CD4-positive, alpha-beta memory T cell (primary cell): ENCODE measurements at regions of chr14 and their contacts with region 1.

Region 1: DNA sequence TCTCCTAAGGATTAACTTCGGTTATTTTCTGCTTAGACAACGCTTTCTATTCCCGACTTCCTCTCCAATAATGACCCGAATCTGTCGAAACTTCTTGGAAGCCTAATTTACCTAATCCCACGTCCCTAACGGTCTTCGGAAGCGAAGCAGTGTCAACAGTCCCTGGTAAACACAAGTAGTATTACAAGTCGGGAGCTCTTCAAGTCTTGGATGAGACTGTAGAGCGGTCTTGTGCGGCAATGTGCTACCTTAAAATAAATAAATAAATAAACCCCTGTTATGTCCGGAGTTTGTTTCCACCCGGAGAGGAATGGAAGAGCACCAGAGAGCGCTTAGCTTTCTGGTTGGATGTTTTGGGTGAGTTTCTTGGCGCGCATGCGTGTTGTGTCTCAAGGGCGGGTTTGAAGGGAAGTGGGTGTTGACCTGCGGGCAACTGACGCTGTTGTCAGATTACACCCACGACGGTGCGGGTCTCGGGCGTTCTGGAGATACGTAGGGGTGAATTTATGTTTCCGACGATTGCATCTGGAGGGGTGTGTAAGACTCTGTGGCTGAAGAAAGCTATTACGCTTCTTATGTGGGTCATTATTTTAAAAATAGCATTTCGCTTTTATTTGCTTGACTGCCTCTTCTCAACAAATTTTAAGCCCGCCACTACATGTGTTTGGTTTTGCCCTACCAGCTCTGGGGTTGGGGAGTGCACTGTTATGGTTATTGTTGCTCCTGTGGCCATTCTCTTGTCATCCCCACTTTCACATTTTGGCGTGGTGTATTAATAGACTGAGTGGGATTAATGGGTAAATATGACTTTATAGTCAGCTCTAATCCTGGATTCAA is at the starts of genes KIAA0586 and TIMM9:
- DNase-seq: peak; percentile 95 to 99 (median 98)
- H3K4me3 ChIP-seq: peak within 1 kb of the TSS; percentile 90 to 96
- H3K4me3 Mint-ChIP-seq: peak within 1 kb of the TSS; percentile 91 to 97 (median 94)
- H3K27ac ChIP-seq: peak within 1 kb of the TSS; percentile 88
- H3K27ac Mint-ChIP-seq: peak within 1 kb of the TSS; percentile 94 to 100 (median 98)
- H3K4me1 ChIP-seq: peaks cover 39% of the 10 kb centered on the region
- H3K4me1 Mint-ChIP-seq: peaks cover 23 to 67% (median 44%) of the 10 kb centered on the region in 4 donors
- H3K27me3 ChIP-seq: no peaks in the 10 kb centered on the region
- H3K27me3 Mint-ChIP-seq: peaks cover 0 to 2% of the 10 kb centered on the region in 2 donors
- total RNA-seq, gene KIAA0586: 43.3 to 48.2 TPM
- total RNA-seq, gene TIMM9: 28.0 to 28.3 TPM

Region 2: GRCh38 chr14:57390028-57390805 is 1037.3 kb before region 1 on chr14 and contains the start of gene NAA30:
- CTCF ChIA-PET with region 1: no interaction called
- POLR2A ChIA-PET with region 1: no interaction called
- intact Hi-C with region 1: loop called (anchors 5 kb)
- DNase-seq: peak; percentile 93 to 98 (median 96)
- H3K4me3 ChIP-seq: peak within 1 kb of the TSS; percentile 50 to 85
- H3K4me3 Mint-ChIP-seq: peak within 1 kb of the TSS; percentile 90 to 98 (median 94)
- H3K27ac ChIP-seq: peak within 1 kb of the TSS; percentile 83
- H3K27ac Mint-ChIP-seq: peak within 1 kb of the TSS; percentile 88 to 97 (median 96)
- H3K4me1 ChIP-seq: peaks cover 42% of the 10 kb centered on the region
- H3K4me1 Mint-ChIP-seq: peaks cover 30 to 53% (median 42%) of the 10 kb centered on the region in 4 donors
- H3K27me3 ChIP-seq: no peaks in the 10 kb centered on the region
- H3K27me3 Mint-ChIP-seq: no peaks in the 10 kb centered on the region
- total RNA-seq, gene NAA30: 18.6 to 21.8 TPM

Region 3: DNA sequence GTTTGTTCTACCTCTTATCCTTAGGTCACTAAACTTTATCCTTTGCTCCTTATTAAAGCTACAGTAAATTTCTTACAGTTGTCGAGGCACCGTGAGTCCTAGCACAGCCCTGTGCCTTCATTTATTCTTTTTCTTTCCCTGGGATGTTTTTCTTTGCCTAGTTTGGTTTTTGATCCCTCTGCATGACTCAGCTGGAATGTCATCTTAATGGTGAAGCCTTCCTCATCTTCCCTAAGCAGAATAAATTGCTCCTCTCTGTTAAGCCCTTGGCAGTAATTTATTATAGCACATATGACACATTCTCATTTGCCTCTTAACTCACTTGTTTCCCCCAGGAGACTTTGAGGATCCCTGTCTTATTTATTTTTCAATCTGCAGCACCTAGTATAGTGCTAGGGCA is 211.0 kb before region 1 on chr14:
- CTCF ChIA-PET with region 1: no interaction called
- POLR2A ChIA-PET with region 1: no interaction called
- intact Hi-C with region 1: no loop called
- DNase-seq: no peak
- H3K4me3 ChIP-seq: no peak overlapping the region
- H3K4me3 Mint-ChIP-seq: no peak overlapping the region
- H3K27ac ChIP-seq: no peak overlapping the region
- H3K27ac Mint-ChIP-seq: no peak overlapping the region
- H3K4me1 ChIP-seq: no peaks in the 10 kb centered on the region
- H3K4me1 Mint-ChIP-seq: peaks cover 0 to 1% (median 0%) of the 10 kb centered on the region in 4 donors
- H3K27me3 ChIP-seq: no peaks in the 10 kb centered on the region
- H3K27me3 Mint-ChIP-seq: no peaks in the 10 kb centered on the region

Region 4: GRCh38 chr14:58239244-58240195 is 188.0 kb before region 1 on chr14:
- CTCF ChIA-PET with region 1: no interaction called
- POLR2A ChIA-PET with region 1: interaction called, 20 read pairs
- intact Hi-C with region 1: loop called (anchors 1 kb)
- DNase-seq: peak; percentile 84 to 88 (median 87)
- H3K4me3 ChIP-seq: peak overlapping the region; percentile 82 to 84
- H3K4me3 Mint-ChIP-seq: no peak overlapping the region
- H3K27ac ChIP-seq: peak overlapping the region; percentile 57
- H3K27ac Mint-ChIP-seq: no peak overlapping the region
- H3K4me1 ChIP-seq: peaks cover 11% of the 10 kb centered on the region
- H3K4me1 Mint-ChIP-seq: peaks cover 17 to 23% (median 20%) of the 10 kb centered on the region in 4 donors
- H3K27me3 ChIP-seq: no peaks in the 10 kb centered on the region
- H3K27me3 Mint-ChIP-seq: peaks cover 0 to 2% of the 10 kb centered on the region in 2 donors

Region 5: DNA sequence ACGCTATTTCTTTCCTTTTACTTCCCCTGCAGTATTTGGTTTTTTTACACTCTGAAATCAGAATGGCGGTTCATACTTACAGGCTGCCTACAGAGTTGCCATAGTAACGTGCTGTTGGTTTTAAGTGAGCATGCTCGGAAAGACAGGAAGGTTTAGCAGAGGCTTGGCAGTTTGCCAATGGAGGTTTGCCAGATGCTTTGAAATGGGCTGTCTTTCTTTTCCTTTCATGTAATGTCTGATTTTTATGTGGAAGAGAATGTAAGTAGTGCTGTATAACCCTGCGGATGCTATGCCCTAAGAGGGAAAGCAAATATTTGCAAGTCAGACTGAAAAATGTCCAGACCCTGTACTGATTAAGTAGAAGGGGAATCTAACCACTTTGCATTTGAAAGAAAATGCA is 96.4 kb before region 1 on chr14:
- CTCF ChIA-PET with region 1: no interaction called
- POLR2A ChIA-PET with region 1: interaction called, 3 read pairs
- intact Hi-C with region 1: loop called (anchors 1 kb)
- DNase-seq: peak; percentile 92 to 97 (median 96)
- H3K4me3 ChIP-seq: no peak overlapping the region
- H3K4me3 Mint-ChIP-seq: peak overlapping the region; percentile 49 to 78 (median 71)
- H3K27ac ChIP-seq: peak overlapping the region; percentile 55
- H3K27ac Mint-ChIP-seq: peak overlapping the region; percentile 85 to 97 (median 95)
- H3K4me1 ChIP-seq: peaks cover 21% of the 10 kb centered on the region
- H3K4me1 Mint-ChIP-seq: peaks cover 17 to 20% (median 17%) of the 10 kb centered on the region in 4 donors
- H3K27me3 ChIP-seq: no peaks in the 10 kb centered on the region
- H3K27me3 Mint-ChIP-seq: no peaks in the 10 kb centered on the region

Region 6: GRCh38 chr14:59483900-59484638 is 1056.6 kb after region 1 on chr14 and contains the starts of genes JKAMP and L3HYPDH:
- CTCF ChIA-PET with region 1: no interaction called
- POLR2A ChIA-PET with region 1: interaction called, 7 read pairs
- intact Hi-C with region 1: loop called (anchors 1 kb)
- DNase-seq: peak; percentile 95 to 97 (median 95)
- H3K4me3 ChIP-seq: peak within 1 kb of the TSS; percentile 85 to 87
- H3K4me3 Mint-ChIP-seq: peak within 1 kb of the TSS; percentile 92 to 98 (median 96)
- H3K27ac ChIP-seq: peak within 1 kb of the TSS; percentile 82
- H3K27ac Mint-ChIP-seq: peak within 1 kb of the TSS; percentile 90 to 99 (median 96)
- H3K4me1 ChIP-seq: peaks cover 63% of the 10 kb centered on the region
- H3K4me1 Mint-ChIP-seq: peaks cover 52 to 72% (median 58%) of the 10 kb centered on the region in 4 donors
- H3K27me3 ChIP-seq: no peaks in the 10 kb centered on the region
- H3K27me3 Mint-ChIP-seq: no peaks in the 10 kb centered on the region
- total RNA-seq, gene JKAMP: 29.9 to 31.9 TPM
- total RNA-seq, gene L3HYPDH: 52.2 to 52.4 TPM